ENCODE measurements at regions of chr2 and their contacts with region 1.

Region 1: GRCh38 chr2:162301151-162301804 is 17.2 kb downstream of the IFIH1 start:
- DNase-seq: peak; percentile 83
- H3K4me3 Mint-ChIP-seq: no peak overlapping the region
- H3K27ac Mint-ChIP-seq: no peak overlapping the region
- H3K4me1 Mint-ChIP-seq: peaks cover 3% of the 10 kb centered on the region
- H3K27me3 Mint-ChIP-seq: no peaks in the 10 kb centered on the region

Region 2: DNA sequence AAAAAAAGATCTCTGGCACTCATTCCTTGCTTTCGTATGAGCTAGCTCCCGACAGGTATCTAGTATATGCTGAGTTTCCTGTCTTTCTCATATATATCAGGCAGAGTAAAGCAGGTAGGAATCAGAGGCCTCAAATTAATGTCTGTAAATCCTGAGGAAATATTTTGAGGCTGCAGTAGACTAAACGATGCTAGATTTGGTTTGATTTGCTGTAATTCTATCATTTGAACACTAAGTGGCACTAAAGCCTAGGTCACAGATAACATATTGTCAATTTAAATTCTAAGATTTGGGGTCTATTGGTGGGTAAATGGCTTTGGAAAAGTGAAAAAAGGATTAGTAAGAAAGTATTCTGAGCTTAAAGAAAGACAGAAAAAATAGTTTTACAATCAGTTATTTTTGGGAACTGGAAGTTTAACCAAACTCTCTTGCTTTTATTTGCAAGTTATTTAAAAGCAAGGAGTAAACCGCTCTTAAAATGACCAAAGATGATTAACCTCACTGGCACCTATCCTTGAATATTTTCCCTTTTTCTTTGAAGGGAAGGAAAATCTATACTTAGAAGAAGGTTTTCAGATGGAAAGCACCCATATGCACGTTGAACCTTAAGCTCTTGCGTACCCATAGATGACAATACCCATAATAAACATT is 714.6 kb before region 1 on chr2:
- intact Hi-C with region 1: loop called (anchors 5 kb)
- DNase-seq: no peak
- H3K4me3 Mint-ChIP-seq: no peak overlapping the region
- H3K27ac Mint-ChIP-seq: no peak overlapping the region
- H3K4me1 Mint-ChIP-seq: no peaks in the 10 kb centered on the region
- H3K27me3 Mint-ChIP-seq: peaks cover 23% of the 10 kb centered on the region

Region 3: DNA sequence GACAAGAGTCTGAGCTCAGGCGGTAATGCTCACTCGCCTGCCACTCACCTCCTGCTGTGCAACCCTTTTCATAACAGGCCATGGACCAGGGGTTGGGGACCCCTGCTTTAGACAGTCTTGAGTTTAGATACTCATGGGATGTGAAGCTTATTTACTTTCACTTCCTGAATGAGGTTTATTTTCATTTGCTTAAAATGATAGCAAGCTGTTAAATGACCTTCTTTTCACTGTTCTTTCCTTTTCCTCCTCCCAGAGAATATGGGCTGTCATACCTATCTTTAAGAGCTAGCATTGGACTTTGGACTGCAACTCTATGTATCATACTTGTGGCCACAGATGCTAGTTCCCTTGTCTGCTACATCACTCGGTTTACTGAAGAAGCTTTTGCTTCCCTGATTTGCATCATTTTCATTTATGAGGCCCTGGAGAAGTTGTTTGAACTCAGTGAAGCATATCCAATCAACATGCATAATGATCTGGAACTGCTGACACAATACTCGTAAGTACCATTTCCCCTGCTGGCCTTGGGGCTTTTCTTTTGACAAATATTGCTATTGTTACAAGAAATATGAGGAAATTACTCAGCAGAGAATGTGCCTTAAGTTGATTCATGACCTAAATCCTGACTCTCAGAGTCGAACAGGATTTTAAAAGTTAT is 395.8 kb before region 1 on chr2:
- intact Hi-C with region 1: no loop called
- DNase-seq: peak; percentile 58
- H3K4me3 Mint-ChIP-seq: peak overlapping the region; percentile 33
- H3K27ac Mint-ChIP-seq: no peak overlapping the region
- H3K4me1 Mint-ChIP-seq: peaks cover 7% of the 10 kb centered on the region
- H3K27me3 Mint-ChIP-seq: peaks cover 3% of the 10 kb centered on the region

Region 4: GRCh38 chr2:161946489-161947107 is 354.7 kb before region 1 on chr2:
- intact Hi-C with region 1: loop called (anchors 5 kb)
- DNase-seq: peak; percentile 77
- H3K4me3 Mint-ChIP-seq: no peak overlapping the region
- H3K27ac Mint-ChIP-seq: no peak overlapping the region
- H3K4me1 Mint-ChIP-seq: peaks cover 29% of the 10 kb centered on the region
- H3K27me3 Mint-ChIP-seq: peaks cover 9% of the 10 kb centered on the region

Region 5: GRCh38 chr2:162153608-162154224 is 147.6 kb before region 1 on chr2:
- intact Hi-C with region 1: loop called (anchors 1 kb)
- DNase-seq: peak; percentile 89
- H3K4me3 Mint-ChIP-seq: peak overlapping the region; percentile 9
- H3K27ac Mint-ChIP-seq: no peak overlapping the region
- H3K4me1 Mint-ChIP-seq: peaks cover 4% of the 10 kb centered on the region
- H3K27me3 Mint-ChIP-seq: peaks cover 50% of the 10 kb centered on the region

Region 6: GRCh38 chr2:162221064-162221463 is 80.2 kb before region 1 on chr2:
- intact Hi-C with region 1: loop called (anchors 1 kb)
- DNase-seq: peak; percentile 88
- H3K4me3 Mint-ChIP-seq: no peak overlapping the region
- H3K27ac Mint-ChIP-seq: no peak overlapping the region
- H3K4me1 Mint-ChIP-seq: no peaks in the 10 kb centered on the region
- H3K27me3 Mint-ChIP-seq: peaks cover 57% of the 10 kb centered on the region

Region 7: GRCh38 chr2:162233197-162233596 is 68.1 kb before region 1 on chr2:
- intact Hi-C with region 1: no loop called
- DNase-seq: no peak
- H3K4me3 Mint-ChIP-seq: no peak overlapping the region
- H3K27ac Mint-ChIP-seq: no peak overlapping the region
- H3K4me1 Mint-ChIP-seq: no peaks in the 10 kb centered on the region
- H3K27me3 Mint-ChIP-seq: peaks cover 24% of the 10 kb centered on the region

Region 8: GRCh38 chr2:162266460-162266760 is 34.9 kb before region 1 on chr2:
- intact Hi-C with region 1: no loop called
- DNase-seq: no peak
- H3K4me3 Mint-ChIP-seq: no peak overlapping the region
- H3K27ac Mint-ChIP-seq: no peak overlapping the region
- H3K4me1 Mint-ChIP-seq: peaks cover 8% of the 10 kb centered on the region
- H3K27me3 Mint-ChIP-seq: no peaks in the 10 kb centered on the region

Region 9: GRCh38 chr2:162318328-162319180 is 17.3 kb after region 1 on chr2 and contains the start of gene IFIH1:
- intact Hi-C with region 1: loop called (anchors 1 kb)
- DNase-seq: peak; percentile 95
- H3K4me3 Mint-ChIP-seq: peak within 1 kb of the TSS; percentile 87
- H3K27ac Mint-ChIP-seq: peak within 1 kb of the TSS; percentile 93
- H3K4me1 Mint-ChIP-seq: peaks cover 54% of the 10 kb centered on the region
- H3K27me3 Mint-ChIP-seq: no peaks in the 10 kb centered on the region
- total RNA-seq, gene IFIH1: 22.5 and 26.3 TPM in 2 replicates

Region 10: GRCh38 chr2:162343824-162344616 is 42.7 kb after region 1 on chr2 and contains the start of gene GCA:
- intact Hi-C with region 1: loop called (anchors 5 kb)
- DNase-seq: peak; percentile 100
- H3K4me3 Mint-ChIP-seq: peak within 1 kb of the TSS; percentile 91
- H3K27ac Mint-ChIP-seq: peak within 1 kb of the TSS; percentile 69
- H3K4me1 Mint-ChIP-seq: peaks cover 17% of the 10 kb centered on the region
- H3K27me3 Mint-ChIP-seq: peaks cover 5% of the 10 kb centered on the region
- total RNA-seq, gene GCA: 13.6 and 16.2 TPM in 2 replicates

Region 11: DNA sequence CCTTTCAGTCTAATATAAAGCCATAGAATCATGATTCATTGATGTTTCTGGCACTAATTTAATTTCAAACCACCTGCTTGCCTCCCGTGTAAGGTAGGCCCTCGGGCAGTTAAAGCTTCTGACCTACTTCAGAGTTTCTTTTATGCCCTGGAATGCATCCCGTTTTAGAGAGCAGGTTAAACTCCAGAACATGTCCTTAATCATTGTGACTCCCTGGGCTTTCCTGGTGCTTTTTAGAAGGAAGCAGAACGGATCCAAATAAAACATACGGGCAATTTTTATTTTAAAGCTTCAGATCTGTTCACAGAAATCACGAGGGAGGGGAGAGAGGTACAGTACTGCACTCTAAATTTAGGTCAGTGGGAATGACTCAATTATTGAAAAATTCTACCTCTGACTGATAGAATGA is 177.4 kb after region 1 on chr2:
- intact Hi-C with region 1: no loop called
- DNase-seq: no peak
- H3K4me3 Mint-ChIP-seq: no peak overlapping the region
- H3K27ac Mint-ChIP-seq: no peak overlapping the region
- H3K4me1 Mint-ChIP-seq: no peaks in the 10 kb centered on the region
- H3K27me3 Mint-ChIP-seq: no peaks in the 10 kb centered on the region

Measured in activated CD4-positive, alpha-beta T cell treated with anti-CD3 and anti-CD28 coated beads, Interleukin-2, amount 10 ng/mL, durations not matched to agents 24 days and 14 days (primary cell).